ENCODE measurements at regions of chr3 and their contacts with region 1.

Region 1: DNA sequence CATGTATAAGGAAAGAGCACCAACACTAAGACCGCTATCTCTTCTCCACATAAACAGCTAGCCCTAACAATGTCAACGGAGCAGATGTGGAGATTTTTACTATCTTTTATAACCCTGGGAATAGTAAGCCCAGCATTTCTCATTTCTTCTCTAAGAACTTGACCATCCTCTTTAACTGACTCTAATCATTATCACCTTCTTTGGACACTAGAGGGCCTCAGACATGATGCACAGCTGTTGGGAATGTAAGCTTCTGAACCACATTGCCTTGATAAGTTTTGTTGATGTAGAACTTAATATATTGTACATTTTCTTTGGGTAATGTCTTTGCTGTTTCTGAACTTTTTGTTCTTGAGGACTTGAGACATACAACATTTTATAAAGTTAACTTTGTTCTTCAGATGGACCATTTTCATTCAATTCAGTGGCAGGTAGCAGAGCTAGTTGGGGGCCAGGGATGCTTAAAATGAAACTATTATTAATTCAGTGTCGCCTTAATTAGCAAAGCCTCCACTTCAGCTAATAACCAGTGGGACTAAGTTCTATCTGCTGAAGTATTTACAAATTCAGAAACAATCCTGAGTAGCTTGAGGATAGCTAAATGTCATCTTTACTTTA is 9.6 kb upstream of the TAGLN3 start:
- DNase-seq: peak; percentile 80
- ATAC-seq: peak; percentile 94
- H3K4me3 ChIP-seq: no peak overlapping the region
- H3K27ac ChIP-seq: no peak overlapping the region
- H3K4me1 ChIP-seq: no peaks in the 10 kb centered on the region
- H3K27me3 ChIP-seq: no peaks in the 10 kb centered on the region
- CTCF ChIP-seq: peak; percentile 80
- POLR2A ChIP-seq: no peak
- RAD21 ChIP-seq: peak; percentile 82

Region 2: GRCh38 chr3:111978493-111979433 is 10.4 kb before region 1 on chr3 and contains the start of gene ABHD10:
- CTCF ChIA-PET with region 1: interaction called, 11 read pairs
- POLR2A ChIA-PET with region 1: no interaction called
- dilution Hi-C with region 1: no loop called
- in situ Hi-C with region 1: no loop called
- intact Hi-C with region 1: no loop called
- DNase-seq: peak; percentile 98
- ATAC-seq: peak; percentile 96
- H3K4me3 ChIP-seq: peak within 1 kb of the TSS; percentile 80
- H3K27ac ChIP-seq: peak within 1 kb of the TSS; percentile 85
- H3K4me1 ChIP-seq: peaks cover 4% of the 10 kb centered on the region; the same call in 1 of the 2 replicates
- H3K27me3 ChIP-seq: no peaks in the 10 kb centered on the region
- CTCF ChIP-seq: no peak
- POLR2A ChIP-seq: no peak; the same call in 1 of the 2 replicates
- RAD21 ChIP-seq: no peak
- total RNA-seq, gene ABHD10: 53.9 and 57.2 TPM in 2 replicates

Region 3: GRCh38 chr3:112013058-112013783 is 24.1 kb after region 1 on chr3:
- CTCF ChIA-PET with region 1: interaction called, 17 read pairs
- POLR2A ChIA-PET with region 1: no interaction called
- dilution Hi-C with region 1: no loop called
- in situ Hi-C with region 1: no loop called
- intact Hi-C with region 1: loop called (anchors 1 kb)
- DNase-seq: peak; percentile 80
- ATAC-seq: peak; percentile 93
- H3K4me3 ChIP-seq: no peak overlapping the region
- H3K27ac ChIP-seq: no peak overlapping the region
- H3K4me1 ChIP-seq: peaks cover 7% of the 10 kb centered on the region
- H3K27me3 ChIP-seq: no peaks in the 10 kb centered on the region
- CTCF ChIP-seq: peak; percentile 82
- POLR2A ChIP-seq: no peak
- RAD21 ChIP-seq: peak; percentile 87

Region 4: DNA sequence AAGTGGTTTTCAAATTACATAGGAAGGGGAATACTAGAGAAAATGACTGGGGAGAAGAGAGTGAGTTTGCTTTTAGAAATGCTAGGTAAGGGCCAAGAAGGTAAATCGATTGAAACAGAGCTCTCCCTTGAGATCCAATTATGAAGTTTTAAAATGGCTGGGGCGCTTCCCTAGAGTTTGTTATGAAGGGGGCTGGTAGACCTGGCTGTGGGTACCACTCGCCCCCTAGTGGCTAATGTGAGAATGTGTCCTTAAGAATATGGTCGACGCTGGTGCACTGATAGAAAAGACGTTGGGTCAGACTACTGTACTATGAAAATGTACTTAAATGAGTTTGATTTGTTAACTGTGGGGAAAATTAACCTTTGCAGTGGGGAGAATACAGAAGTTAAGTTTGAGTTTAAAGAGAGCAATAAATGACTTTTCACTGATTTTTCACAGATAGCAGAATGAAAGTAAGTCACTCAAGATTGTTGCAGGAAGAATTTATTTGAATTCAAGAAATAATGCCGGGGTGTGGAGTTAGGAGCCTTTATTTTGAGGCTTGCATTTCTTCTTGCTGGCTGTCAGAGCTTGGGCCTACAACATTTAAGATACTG is 54.5 kb after region 1 on chr3:
- CTCF ChIA-PET with region 1: interaction called, 12 read pairs
- POLR2A ChIA-PET with region 1: interaction called, 17 read pairs
- dilution Hi-C with region 1: no loop called
- in situ Hi-C with region 1: no loop called
- intact Hi-C with region 1: loop called (anchors 1 kb)
- DNase-seq: peak; percentile 79
- ATAC-seq: peak; percentile 99
- H3K4me3 ChIP-seq: peak overlapping the region; percentile 14; the same call in 1 of the 2 replicates
- H3K27ac ChIP-seq: no peak overlapping the region
- H3K4me1 ChIP-seq: peaks cover 1% of the 10 kb centered on the region; the same call in 1 of the 2 replicates
- H3K27me3 ChIP-seq: no peaks in the 10 kb centered on the region
- CTCF ChIP-seq: peak; percentile 90
- POLR2A ChIP-seq: no peak
- RAD21 ChIP-seq: peak; percentile 79

Region 5: GRCh38 chr3:112247900-112248299 is 258.7 kb after region 1 on chr3:
- CTCF ChIA-PET with region 1: no interaction called
- POLR2A ChIA-PET with region 1: no interaction called
- dilution Hi-C with region 1: no loop called
- in situ Hi-C with region 1: no loop called
- intact Hi-C with region 1: no loop called
- DNase-seq: no peak
- ATAC-seq: no peak
- H3K4me3 ChIP-seq: no peak overlapping the region
- H3K27ac ChIP-seq: no peak overlapping the region
- H3K4me1 ChIP-seq: no peaks in the 10 kb centered on the region
- H3K27me3 ChIP-seq: no peaks in the 10 kb centered on the region
- CTCF ChIP-seq: no peak
- POLR2A ChIP-seq: no peak
- RAD21 ChIP-seq: no peak

Measured in IMR-90 (cell line).